Activated CD8-positive, alpha-beta T cell treated with anti-CD3 and anti-CD28 coated beads for 36 hours (primary cell): ENCODE measurements at regions of chr20 and their contacts with region 1.

Region 1: GRCh38 chr20:47272893-47273590 is 83.5 kb downstream of the ZMYND8 start:
- DNase-seq: peak; percentile 66
- ATAC-seq: peak; percentile 79
- H3K4me3 Mint-ChIP-seq: no peak overlapping the region
- H3K27ac Mint-ChIP-seq: peak overlapping the region; percentile 92
- H3K4me1 Mint-ChIP-seq: peaks cover 47% of the 10 kb centered on the region
- H3K27me3 Mint-ChIP-seq: no peaks in the 10 kb centered on the region
- CTCF ChIP-seq: peak; percentile 97

Region 2: GRCh38 chr20:47196091-47197081 is 76.7 kb before region 1 on chr20:
- CTCF ChIA-PET with region 1: interaction called, 21 read pairs
- POLR2A ChIA-PET with region 1: no interaction called
- intact Hi-C with region 1: loop called (anchors 10 kb)
- DNase-seq: peak; percentile 85
- ATAC-seq: peak; percentile 77
- H3K4me3 Mint-ChIP-seq: no peak overlapping the region
- H3K27ac Mint-ChIP-seq: no peak overlapping the region
- H3K4me1 Mint-ChIP-seq: peaks cover 14% of the 10 kb centered on the region
- H3K27me3 Mint-ChIP-seq: peaks cover 4% of the 10 kb centered on the region
- CTCF ChIP-seq: peak; percentile 91

Region 3: DNA sequence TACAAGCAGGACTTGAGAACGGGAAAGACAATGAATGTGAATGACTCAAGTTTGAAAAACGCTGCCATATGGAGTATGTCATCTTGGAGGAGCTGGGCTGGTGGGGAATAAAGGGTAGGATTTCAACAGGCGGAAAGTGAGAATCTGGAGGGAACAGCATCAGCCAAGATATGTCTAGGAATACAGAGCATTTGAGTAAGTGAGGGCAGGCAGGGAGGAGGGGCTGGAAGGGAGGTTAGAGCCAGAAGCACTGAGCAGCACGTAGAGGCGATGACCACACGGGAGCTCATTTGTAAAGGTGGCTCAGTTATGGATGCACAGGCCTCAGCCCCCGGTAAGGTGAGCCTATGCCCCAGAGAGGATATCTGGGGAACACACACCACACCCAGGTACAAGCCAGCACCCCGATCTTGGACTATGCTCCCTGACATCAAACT is 31.7 kb before region 1 on chr20:
- CTCF ChIA-PET with region 1: interaction called, 10 read pairs
- POLR2A ChIA-PET with region 1: no interaction called
- intact Hi-C with region 1: no loop called
- DNase-seq: no peak
- ATAC-seq: no peak
- H3K4me3 Mint-ChIP-seq: no peak overlapping the region
- H3K27ac Mint-ChIP-seq: no peak overlapping the region
- H3K4me1 Mint-ChIP-seq: no peaks in the 10 kb centered on the region
- H3K27me3 Mint-ChIP-seq: no peaks in the 10 kb centered on the region
- CTCF ChIP-seq: no peak

Region 4: GRCh38 chr20:47317127-47317895 is 44.3 kb after region 1 on chr20:
- CTCF ChIA-PET with region 1: interaction called, 19 read pairs
- POLR2A ChIA-PET with region 1: no interaction called
- intact Hi-C with region 1: no loop called
- DNase-seq: peak; percentile 75
- ATAC-seq: peak; percentile 72
- H3K4me3 Mint-ChIP-seq: peak overlapping the region; percentile 57
- H3K27ac Mint-ChIP-seq: peak overlapping the region; percentile 94
- H3K4me1 Mint-ChIP-seq: peaks cover 66% of the 10 kb centered on the region
- H3K27me3 Mint-ChIP-seq: no peaks in the 10 kb centered on the region
- CTCF ChIP-seq: no peak

Region 5: DNA sequence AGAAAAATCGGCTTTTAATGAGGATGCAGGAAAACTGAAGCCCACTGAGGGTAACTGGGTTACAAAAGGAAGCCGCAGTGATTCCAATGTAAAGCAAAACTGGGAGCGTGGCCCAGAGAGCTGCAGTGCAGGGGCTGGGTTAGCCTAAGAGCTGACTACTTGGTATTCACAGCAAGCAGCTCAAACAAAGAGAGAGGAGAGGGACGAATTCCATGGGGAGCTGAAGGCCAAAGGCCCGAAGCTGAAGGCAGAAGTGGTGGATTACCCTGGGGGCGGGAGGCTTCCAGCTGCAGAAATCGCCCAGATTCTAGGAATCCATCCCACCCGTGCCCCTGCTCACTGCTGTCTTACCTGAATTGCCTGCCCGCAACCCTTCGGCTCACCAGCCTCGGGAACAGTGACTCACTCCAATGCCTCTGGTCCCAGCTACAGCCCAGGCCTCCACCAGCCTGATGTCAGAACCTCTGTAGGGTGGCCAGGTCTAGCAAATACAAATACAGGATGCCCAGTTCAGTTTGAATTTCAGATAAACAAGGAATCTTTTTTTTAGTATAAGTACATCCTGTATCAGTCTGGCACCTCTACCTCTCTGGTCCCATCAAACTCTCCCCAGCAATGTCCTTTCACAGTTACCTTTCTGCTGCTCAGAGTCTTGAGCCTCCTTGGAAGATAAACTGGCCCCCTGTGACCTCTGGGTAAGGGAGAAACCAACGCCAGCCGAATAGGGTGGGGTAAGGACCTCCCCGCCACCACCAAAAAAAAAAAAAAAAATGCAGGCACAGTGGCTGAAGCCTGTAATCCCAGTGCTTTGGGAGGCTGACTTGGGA is 98.0 kb after region 1 on chr20:
- CTCF ChIA-PET with region 1: interaction called, 620 read pairs
- POLR2A ChIA-PET with region 1: no interaction called
- intact Hi-C with region 1: no loop called
- DNase-seq: no peak
- ATAC-seq: no peak
- H3K4me3 Mint-ChIP-seq: no peak overlapping the region
- H3K27ac Mint-ChIP-seq: no peak overlapping the region
- H3K4me1 Mint-ChIP-seq: peaks cover 4% of the 10 kb centered on the region
- H3K27me3 Mint-ChIP-seq: no peaks in the 10 kb centered on the region
- CTCF ChIP-seq: no peak

Region 6: GRCh38 chr20:47508278-47508677 is 235.2 kb after region 1 on chr20:
- CTCF ChIA-PET with region 1: interaction called, 15 read pairs
- POLR2A ChIA-PET with region 1: no interaction called
- intact Hi-C with region 1: no loop called
- DNase-seq: no peak
- ATAC-seq: no peak
- H3K4me3 Mint-ChIP-seq: peak overlapping the region; percentile 71
- H3K27ac Mint-ChIP-seq: peak overlapping the region; percentile 98
- H3K4me1 Mint-ChIP-seq: peaks cover 67% of the 10 kb centered on the region
- H3K27me3 Mint-ChIP-seq: no peaks in the 10 kb centered on the region
- CTCF ChIP-seq: no peak